MCF 10A (cell line): ENCODE measurements at regions of chr18 and their contacts with region 1.

Region 1: DNA sequence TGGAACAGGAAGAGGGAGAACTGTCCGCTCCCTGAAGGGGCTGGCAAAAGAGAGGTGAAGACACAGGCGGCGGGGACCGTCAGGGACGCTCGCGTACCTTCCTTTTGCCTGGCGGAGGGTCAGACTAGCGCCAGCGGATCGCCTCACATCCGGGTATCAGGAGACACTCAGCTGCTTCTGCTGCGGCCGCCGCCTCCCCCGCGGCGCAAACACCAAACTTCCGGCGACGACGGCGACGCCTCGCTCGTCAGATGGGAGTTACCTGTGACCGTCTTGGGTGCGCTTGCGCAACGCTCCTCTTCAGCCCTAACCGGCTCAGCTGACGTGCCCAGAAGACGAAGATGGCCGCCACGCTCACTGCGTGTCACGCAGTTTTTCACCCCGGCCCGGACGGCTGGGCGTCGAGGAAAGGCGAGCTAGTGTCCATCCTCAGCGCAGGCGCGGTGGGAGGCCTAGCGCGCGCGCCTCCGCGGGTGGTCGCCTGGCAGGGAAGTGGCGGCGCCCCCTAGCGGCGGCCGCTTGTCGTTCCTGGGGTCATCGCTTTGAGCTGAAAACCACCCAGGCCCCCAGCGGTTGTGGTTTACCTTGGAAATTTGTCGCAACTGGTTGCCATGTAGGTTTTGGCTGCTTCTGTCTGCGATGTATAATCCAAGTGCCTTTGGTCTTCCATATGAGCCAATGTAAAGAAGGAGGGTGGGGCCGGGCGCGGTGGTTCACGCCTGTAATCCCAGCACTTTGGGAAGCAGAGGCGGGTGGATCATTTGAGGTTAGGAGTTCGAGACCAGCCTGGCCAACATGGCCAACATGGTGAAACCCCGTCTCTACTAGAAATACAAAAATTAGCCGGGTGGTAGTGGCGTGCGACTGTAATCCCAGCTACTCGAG is at the start of gene ESCO1:
- DNase-seq: peak; percentile 98
- H3K4me3 Mint-ChIP-seq: peak within 1 kb of the TSS; percentile 99
- H3K27ac Mint-ChIP-seq: peak within 1 kb of the TSS; percentile 99
- H3K4me1 Mint-ChIP-seq: peaks cover 5% of the 10 kb centered on the region
- H3K27me3 Mint-ChIP-seq: no peaks in the 10 kb centered on the region
- CTCF ChIP-seq: peak; percentile 99
- total RNA-seq, gene ESCO1: 18.8 and 19.2 TPM in 2 replicates

Region 2: DNA sequence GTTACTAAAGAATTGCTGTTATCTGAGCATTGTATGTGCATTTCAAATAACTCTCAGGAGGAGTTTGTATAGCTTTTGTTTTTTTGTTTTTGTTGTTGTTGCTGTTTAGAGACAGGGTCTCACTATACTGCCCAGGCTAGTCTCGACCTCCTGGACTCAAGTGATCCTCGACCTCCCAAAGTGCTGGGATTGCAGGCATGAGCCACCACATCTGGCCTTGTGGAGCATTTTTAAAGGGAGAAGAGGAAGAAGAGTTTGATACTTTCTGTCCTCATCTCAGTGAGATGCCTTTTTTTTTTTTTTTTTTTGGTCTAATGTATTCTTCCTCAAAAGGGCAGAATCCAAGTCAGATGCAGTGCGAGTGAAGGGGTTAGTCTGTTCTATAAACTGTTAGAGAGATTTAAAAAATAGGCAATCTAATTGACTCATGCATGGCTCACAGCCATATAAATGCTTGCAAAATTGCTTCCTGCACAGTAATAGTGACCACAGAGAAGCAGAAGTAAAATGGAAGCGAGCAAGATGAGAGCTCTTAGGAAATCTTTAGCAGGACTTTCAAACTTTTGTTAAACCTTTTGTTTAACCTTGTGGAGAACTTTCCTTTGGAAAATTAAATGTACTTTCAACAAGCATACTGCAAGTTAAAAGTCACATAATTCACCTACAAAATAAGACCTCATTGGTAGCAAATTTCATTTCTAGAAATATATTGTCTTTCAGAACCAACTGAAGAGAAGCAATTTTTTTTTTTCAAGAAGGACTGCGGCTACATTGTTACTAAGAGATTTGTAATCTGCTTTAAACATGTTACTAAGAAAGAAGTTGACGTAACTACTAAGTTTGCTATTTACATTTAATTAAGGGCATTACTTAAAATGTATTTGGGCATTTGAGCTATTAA is 436.9 kb before region 1 on chr18:
- CTCF ChIA-PET with region 1: no interaction called
- POLR2A ChIA-PET with region 1: interaction called, 10 read pairs
- intact Hi-C with region 1: no loop called
- DNase-seq: peak; percentile 85
- H3K4me3 Mint-ChIP-seq: peak overlapping the region; percentile 28
- H3K27ac Mint-ChIP-seq: peak overlapping the region; percentile 59
- H3K4me1 Mint-ChIP-seq: peaks cover 15% of the 10 kb centered on the region
- H3K27me3 Mint-ChIP-seq: no peaks in the 10 kb centered on the region
- CTCF ChIP-seq: no peak

Region 3: GRCh38 chr18:21489119-21489750 is 111.5 kb before region 1 on chr18:
- CTCF ChIA-PET with region 1: no interaction called
- POLR2A ChIA-PET with region 1: interaction called, 3 read pairs
- intact Hi-C with region 1: loop called (anchors 2 kb)
- DNase-seq: peak; percentile 74
- H3K4me3 Mint-ChIP-seq: no peak overlapping the region
- H3K27ac Mint-ChIP-seq: no peak overlapping the region
- H3K4me1 Mint-ChIP-seq: peaks cover 8% of the 10 kb centered on the region
- H3K27me3 Mint-ChIP-seq: no peaks in the 10 kb centered on the region
- CTCF ChIP-seq: peak; percentile 67

Region 4: DNA sequence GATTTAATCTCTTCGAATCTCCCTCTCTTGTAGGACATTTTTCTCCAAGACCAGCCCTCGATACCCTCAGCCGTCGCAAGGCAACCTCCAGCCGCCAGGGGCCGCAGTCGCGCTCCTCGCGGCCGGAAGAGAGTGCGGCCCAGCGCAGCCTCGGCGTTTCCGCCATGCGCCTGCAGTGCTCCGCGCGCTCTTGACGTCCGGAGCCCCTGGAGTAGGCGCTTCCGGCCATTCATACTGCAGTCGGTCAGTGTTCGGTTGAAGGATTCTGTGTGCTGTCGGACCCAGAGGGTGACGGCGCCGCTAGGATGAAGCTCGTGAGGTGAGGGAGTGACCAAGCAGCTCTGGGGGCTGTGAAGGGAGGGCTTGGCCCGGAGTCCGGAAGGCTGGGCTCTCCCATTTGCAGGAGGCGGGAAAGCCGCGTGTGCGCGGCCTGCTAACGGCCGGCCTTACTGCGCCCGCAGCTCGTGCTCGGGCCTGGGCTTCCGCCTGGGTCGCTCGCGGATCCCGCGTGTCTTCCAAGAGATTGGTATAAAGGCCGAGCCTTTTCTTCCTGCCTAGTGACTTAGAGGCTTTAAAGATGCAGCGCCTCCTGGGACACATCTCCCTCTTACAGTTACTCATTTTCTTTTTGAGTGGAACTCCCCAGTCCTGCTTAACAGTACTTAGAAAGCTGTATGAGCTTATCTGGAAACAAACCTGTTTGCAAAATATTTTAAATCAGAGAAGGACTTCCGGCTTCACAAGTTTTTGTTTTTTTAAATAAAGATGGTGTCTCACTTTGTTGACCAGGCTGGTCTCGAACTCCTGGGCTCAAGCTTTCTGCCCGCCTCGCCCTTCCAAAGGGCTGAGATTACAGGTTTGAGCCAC is 11.6 kb after region 1 on chr18 and contains the start of gene SNRPD1:
- CTCF ChIA-PET with region 1: interaction called, 64 read pairs
- POLR2A ChIA-PET with region 1: interaction called, 129 read pairs
- intact Hi-C with region 1: loop called (anchors 1 kb)
- DNase-seq: peak; percentile 88
- H3K4me3 Mint-ChIP-seq: peak within 1 kb of the TSS; percentile 90
- H3K27ac Mint-ChIP-seq: peak within 1 kb of the TSS; percentile 96
- H3K4me1 Mint-ChIP-seq: peaks cover 6% of the 10 kb centered on the region
- H3K27me3 Mint-ChIP-seq: no peaks in the 10 kb centered on the region
- CTCF ChIP-seq: peak; percentile 93
- total RNA-seq, gene SNRPD1: 108 and 110 TPM in 2 replicates

Region 5: DNA sequence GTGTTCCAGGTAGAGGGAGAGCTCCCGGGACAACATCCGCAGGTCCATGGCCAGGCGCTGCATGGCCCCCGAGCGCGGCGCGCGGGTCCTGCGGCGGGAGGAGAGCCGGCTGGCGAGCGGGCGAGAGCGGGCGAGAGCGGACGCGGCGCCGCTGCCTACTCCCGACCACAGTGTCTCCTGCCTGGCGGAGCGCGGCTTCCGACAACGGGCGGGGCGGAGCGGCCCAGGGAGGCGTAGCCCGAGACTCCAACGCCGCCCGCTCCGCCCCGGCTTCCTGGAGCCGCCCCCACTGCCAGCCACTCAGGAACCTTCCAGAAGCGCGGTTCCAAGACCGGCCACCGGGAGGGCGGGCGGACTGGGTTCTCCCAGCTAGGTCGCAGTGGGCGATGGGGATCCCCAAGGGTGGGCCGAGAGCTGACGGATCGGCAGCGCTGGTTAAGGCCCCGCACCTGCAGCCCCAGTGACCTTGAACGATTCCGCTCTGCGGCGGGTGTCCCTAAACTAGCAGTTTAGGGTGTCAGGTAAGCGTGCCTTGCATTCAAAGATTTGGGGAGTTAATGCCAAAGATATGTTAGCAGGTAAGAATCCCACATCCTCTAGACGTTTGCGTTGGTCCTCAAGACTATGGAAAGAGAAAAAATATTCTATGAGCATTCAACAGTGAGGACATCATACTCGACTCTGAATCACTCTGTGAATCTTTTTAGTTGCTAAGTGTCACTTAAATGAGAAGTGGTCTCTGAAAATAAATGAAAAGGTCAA is 104.0 kb after region 1 on chr18 and contains the start of gene ABHD3:
- CTCF ChIA-PET with region 1: interaction called, 3 read pairs
- POLR2A ChIA-PET with region 1: interaction called, 29 read pairs
- intact Hi-C with region 1: no loop called
- DNase-seq: peak; percentile 92
- H3K4me3 Mint-ChIP-seq: peak within 1 kb of the TSS; percentile 80
- H3K27ac Mint-ChIP-seq: peak within 1 kb of the TSS; percentile 67
- H3K4me1 Mint-ChIP-seq: peaks cover 4% of the 10 kb centered on the region
- H3K27me3 Mint-ChIP-seq: no peaks in the 10 kb centered on the region
- CTCF ChIP-seq: peak; percentile 42
- total RNA-seq, gene ABHD3: 2.9 and 5.5 TPM in 2 replicates

Region 6: GRCh38 chr18:22074282-22075069 is 473.7 kb after region 1 on chr18:
- CTCF ChIA-PET with region 1: no interaction called
- POLR2A ChIA-PET with region 1: no interaction called
- intact Hi-C with region 1: no loop called
- DNase-seq: no peak
- H3K4me3 Mint-ChIP-seq: no peak overlapping the region
- H3K27ac Mint-ChIP-seq: no peak overlapping the region
- H3K4me1 Mint-ChIP-seq: no peaks in the 10 kb centered on the region
- H3K27me3 Mint-ChIP-seq: no peaks in the 10 kb centered on the region
- CTCF ChIP-seq: no peak

Region 7: GRCh38 chr18:22408059-22408458 is 807.3 kb after region 1 on chr18:
- CTCF ChIA-PET with region 1: no interaction called
- POLR2A ChIA-PET with region 1: no interaction called
- intact Hi-C with region 1: no loop called
- DNase-seq: no peak
- H3K4me3 Mint-ChIP-seq: no peak overlapping the region
- H3K27ac Mint-ChIP-seq: no peak overlapping the region
- H3K4me1 Mint-ChIP-seq: peaks cover 3% of the 10 kb centered on the region
- H3K27me3 Mint-ChIP-seq: no peaks in the 10 kb centered on the region
- CTCF ChIP-seq: no peak